ENCODE measurements at regions of chr21 and their contacts with region 1.

Region 1: GRCh38 chr21:42684109-42684916 is 30.9 kb downstream of the PDE9A start:
- DNase-seq: peak; percentile 73
- ATAC-seq: peak; percentile 69
- H3K4me3 Mint-ChIP-seq: peak overlapping the region; percentile 73
- H3K27ac Mint-ChIP-seq: peak overlapping the region; percentile 98
- H3K4me1 Mint-ChIP-seq: peaks cover 49% of the 10 kb centered on the region
- H3K27me3 Mint-ChIP-seq: no peaks in the 10 kb centered on the region

Region 2: DNA sequence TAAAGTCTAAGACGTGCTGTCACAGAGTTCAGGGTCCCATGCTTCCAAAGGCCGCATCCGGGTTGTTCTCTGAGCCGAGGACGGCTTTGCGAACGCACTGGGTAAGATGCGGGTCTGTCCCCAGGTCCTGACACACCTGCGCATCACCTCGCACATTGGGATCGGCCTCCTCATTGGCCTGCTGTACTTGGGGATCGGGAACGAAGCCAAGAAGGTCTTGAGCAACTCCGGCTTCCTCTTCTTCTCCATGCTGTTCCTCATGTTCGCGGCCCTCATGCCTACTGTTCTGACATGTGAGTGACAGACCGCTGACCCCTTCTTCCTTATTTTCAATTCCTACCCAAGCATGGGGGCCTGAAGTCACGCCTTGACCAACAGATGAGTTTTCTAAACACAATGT is 394.4 kb before region 1 on chr21:
- CTCF ChIA-PET with region 1: no interaction called
- POLR2A ChIA-PET with region 1: no interaction called
- intact Hi-C with region 1: no loop called
- DNase-seq: no peak
- ATAC-seq: no peak
- H3K4me3 Mint-ChIP-seq: no peak overlapping the region
- H3K27ac Mint-ChIP-seq: no peak overlapping the region
- H3K4me1 Mint-ChIP-seq: no peaks in the 10 kb centered on the region
- H3K27me3 Mint-ChIP-seq: no peaks in the 10 kb centered on the region

Region 3: DNA sequence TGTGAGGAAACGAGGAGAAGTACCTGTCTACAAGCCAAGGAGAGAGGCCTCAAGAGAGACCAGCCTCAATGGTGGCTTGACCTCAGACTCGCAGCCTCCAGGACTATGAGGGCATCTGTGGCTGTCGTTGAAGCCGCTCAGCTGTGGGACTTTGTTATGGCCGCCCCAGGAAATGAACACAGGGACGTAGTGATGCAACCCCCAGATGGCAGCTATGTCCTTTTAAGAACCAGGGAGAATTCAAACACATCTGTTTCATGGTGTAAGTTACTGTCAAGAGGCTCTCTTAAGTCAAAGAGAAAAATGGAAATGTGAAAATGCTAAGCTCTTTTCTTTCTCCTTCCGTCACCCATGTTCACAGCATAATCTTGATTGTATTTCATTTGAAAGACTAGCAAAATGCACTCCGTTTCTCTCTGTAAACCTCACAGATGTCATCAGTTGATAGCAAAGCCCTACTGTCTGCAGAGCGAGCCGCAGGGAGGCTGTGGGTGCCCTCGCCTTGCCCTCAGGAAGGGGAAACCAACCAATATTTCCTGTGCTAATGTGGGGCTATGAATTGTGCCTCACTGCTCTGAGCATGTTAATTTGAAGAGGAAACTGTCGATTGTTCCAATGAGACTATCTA is 259.3 kb before region 1 on chr21:
- CTCF ChIA-PET with region 1: no interaction called
- POLR2A ChIA-PET with region 1: no interaction called
- intact Hi-C with region 1: loop called in 1 of 2 experiments (anchors 5 kb)
- DNase-seq: peak; percentile 78
- ATAC-seq: peak; percentile 55
- H3K4me3 Mint-ChIP-seq: peak overlapping the region; percentile 64
- H3K27ac Mint-ChIP-seq: peak overlapping the region; percentile 87
- H3K4me1 Mint-ChIP-seq: peaks cover 74% of the 10 kb centered on the region
- H3K27me3 Mint-ChIP-seq: no peaks in the 10 kb centered on the region

Region 4: DNA sequence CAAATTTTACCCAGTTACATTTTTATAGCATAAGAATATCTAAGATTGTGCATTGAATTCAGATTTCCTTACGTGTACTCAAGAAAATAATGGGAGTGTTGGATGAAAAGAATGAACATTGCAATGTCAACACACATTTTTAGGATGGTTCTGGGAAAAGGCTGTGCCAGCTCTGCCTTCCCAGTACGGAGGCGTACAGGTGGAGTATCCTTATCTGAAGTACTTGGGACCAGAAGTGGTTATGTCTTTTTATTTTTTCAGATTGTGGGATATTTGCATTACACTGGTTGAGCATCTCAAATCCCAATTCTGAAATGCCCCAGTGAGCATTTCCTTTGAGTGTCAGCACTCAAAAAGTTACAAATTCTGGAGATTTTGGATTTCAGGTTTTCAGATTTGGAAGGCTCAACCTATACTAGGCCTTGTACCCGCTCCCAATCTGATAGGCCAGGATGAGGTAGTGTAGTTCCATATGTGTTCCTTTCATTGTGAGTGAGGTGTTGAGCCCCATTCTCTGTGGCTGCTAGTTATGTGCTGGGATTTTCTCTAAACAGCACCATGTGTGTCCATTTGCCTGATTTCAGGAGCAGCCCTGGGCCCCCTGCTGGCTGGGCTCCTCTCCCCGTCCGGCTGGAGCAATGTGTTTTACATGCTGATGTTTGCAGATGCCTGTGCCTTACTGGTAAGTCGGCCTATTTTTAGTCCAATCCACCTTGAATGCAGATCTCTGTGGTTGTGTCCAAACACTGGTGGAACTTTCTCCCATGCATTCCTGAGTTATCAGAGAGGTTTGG is 109.9 kb before region 1 on chr21:
- CTCF ChIA-PET with region 1: no interaction called
- POLR2A ChIA-PET with region 1: no interaction called
- intact Hi-C with region 1: no loop called
- DNase-seq: no peak
- ATAC-seq: no peak
- H3K4me3 Mint-ChIP-seq: no peak overlapping the region
- H3K27ac Mint-ChIP-seq: no peak overlapping the region
- H3K4me1 Mint-ChIP-seq: no peaks in the 10 kb centered on the region
- H3K27me3 Mint-ChIP-seq: no peaks in the 10 kb centered on the region

Region 5: GRCh38 chr21:42614811-42615659 is 69.3 kb before region 1 on chr21:
- CTCF ChIA-PET with region 1: no interaction called
- POLR2A ChIA-PET with region 1: no interaction called
- intact Hi-C with region 1: loop called (anchors 2 kb)
- DNase-seq: peak; percentile 84
- ATAC-seq: peak; percentile 88
- H3K4me3 Mint-ChIP-seq: no peak overlapping the region
- H3K27ac Mint-ChIP-seq: no peak overlapping the region
- H3K4me1 Mint-ChIP-seq: peaks cover 7% of the 10 kb centered on the region
- H3K27me3 Mint-ChIP-seq: no peaks in the 10 kb centered on the region

Region 6: GRCh38 chr21:42652527-42653230 is 31.6 kb before region 1 on chr21:
- CTCF ChIA-PET with region 1: interaction called, 3 read pairs
- POLR2A ChIA-PET with region 1: no interaction called
- intact Hi-C with region 1: loop called in 1 of 2 experiments (anchors 2 kb)
- DNase-seq: no peak
- ATAC-seq: no peak
- H3K4me3 Mint-ChIP-seq: peak overlapping the region; percentile 68
- H3K27ac Mint-ChIP-seq: peak overlapping the region; percentile 39
- H3K4me1 Mint-ChIP-seq: peaks cover 17% of the 10 kb centered on the region
- H3K27me3 Mint-ChIP-seq: peaks cover 3% of the 10 kb centered on the region

Region 7: GRCh38 chr21:42746593-42747275 is 62.4 kb after region 1 on chr21:
- CTCF ChIA-PET with region 1: interaction called, 3 read pairs
- POLR2A ChIA-PET with region 1: no interaction called
- intact Hi-C with region 1: loop called (anchors 5 kb)
- DNase-seq: peak; percentile 51
- ATAC-seq: peak; percentile 71
- H3K4me3 Mint-ChIP-seq: peak overlapping the region; percentile 41
- H3K27ac Mint-ChIP-seq: peak overlapping the region; percentile 91
- H3K4me1 Mint-ChIP-seq: peaks cover 19% of the 10 kb centered on the region
- H3K27me3 Mint-ChIP-seq: no peaks in the 10 kb centered on the region

Region 8: DNA sequence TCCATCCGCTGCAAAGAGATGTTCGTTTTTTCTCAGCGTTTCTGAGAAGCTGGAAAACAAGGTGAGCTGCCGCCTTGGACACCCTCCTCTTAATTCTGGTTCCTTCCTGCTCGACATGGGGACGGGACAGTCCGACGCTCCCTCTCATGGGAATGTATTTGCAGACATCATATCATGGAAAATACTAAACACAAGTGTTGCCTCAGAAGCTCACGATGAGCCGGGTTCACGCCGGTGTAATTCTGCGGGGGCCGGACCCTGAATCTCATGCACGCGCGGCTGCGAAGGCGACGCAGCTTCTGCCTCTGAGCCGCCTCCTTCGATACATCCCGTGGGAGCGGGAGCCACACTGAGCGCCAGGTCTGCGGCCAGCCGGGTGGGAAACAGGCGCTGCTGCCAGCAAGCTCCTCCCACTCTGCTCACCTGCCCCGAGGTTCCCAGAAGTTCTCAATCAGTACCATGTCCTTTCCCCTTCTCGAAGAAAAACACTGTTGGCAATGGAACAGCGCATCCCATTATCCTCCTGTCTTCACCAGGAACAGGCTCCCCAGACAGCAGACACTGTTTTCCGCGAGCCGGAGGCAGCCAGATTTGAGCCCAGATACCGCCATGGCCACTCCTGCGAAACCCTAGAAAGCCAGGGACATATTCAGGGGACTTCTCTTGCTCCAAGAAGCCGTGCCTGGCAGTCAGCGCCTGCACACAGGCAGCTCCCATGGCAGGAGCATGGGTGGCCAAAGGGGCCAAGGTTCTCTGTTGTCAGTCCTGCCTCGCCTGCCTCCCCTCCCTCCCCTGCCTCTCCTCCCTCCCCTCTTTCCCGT is 97.0 kb after region 1 on chr21:
- CTCF ChIA-PET with region 1: no interaction called
- POLR2A ChIA-PET with region 1: no interaction called
- intact Hi-C with region 1: loop called in 1 of 2 experiments (anchors 5 kb)
- DNase-seq: peak; percentile 32
- ATAC-seq: no peak
- H3K4me3 Mint-ChIP-seq: no peak overlapping the region
- H3K27ac Mint-ChIP-seq: no peak overlapping the region
- H3K4me1 Mint-ChIP-seq: peaks cover 43% of the 10 kb centered on the region
- H3K27me3 Mint-ChIP-seq: peaks cover 4% of the 10 kb centered on the region

Measured in activated CD4-positive, alpha-beta T cell treated with anti-CD3 and anti-CD28 coated beads for 36 hours (primary cell).